Psoas muscle (tissue), 8 donors: ENCODE measurements at regions of chr12 and their contacts with region 1.

Region 1: GRCh38 chr12:452667-453210 is 7.0 kb upstream of the B4GALNT3 start:
- DNase-seq: peak; percentile 22 to 69
- ATAC-seq: peak in 3 of 4 donors; percentile 33 to 65 (median 53)
- H3K4me3 ChIP-seq: no peak overlapping the region
- H3K27ac ChIP-seq: no peak overlapping the region
- H3K4me1 ChIP-seq: no peaks in the 10 kb centered on the region
- H3K27me3 ChIP-seq: no peaks in the 10 kb centered on the region
- CTCF ChIP-seq: no peak

Region 2: DNA sequence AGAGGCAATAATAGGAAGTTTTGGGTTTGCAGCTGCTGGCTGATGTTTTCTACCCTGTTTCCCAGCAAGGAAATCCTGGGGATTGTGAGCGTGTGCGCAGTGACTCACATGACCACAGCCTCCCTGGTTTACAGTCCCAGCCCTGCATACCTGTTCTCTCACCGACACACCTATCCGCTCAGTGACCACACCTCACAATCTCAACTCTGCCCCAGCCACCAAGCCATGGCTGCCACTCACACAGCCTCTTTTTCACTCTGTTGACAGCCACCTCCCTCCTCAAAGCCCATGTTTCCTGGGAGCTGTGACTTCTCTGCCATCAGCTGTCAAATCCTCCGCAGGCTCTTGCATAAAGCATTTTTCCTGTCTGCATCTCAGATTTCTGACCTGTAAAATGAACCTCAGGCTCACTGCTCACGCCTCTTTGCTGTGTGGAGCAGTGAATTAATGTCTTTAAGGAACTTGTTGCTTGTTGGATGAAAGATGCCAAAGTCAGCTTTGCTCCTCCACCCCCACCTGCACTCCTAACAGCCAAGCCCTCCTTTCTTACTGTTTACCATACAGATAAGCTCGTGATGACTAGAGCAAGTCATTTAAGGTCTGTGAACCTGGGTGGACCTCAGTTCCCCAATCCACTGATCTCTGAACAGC is 50.5 kb after region 1 on chr12:
- intact Hi-C with region 1: loop called in 1 of 2 experiments (anchors 5 kb)
- DNase-seq: no peak
- ATAC-seq: peak; percentile 61 to 78 (median 72)
- H3K4me3 ChIP-seq: no peak overlapping the region
- H3K27ac ChIP-seq: peak overlapping the region; percentile 81
- H3K4me1 ChIP-seq: peaks cover 20% of the 10 kb centered on the region
- H3K27me3 ChIP-seq: no peaks in the 10 kb centered on the region
- CTCF ChIP-seq: no peak

Region 3: DNA sequence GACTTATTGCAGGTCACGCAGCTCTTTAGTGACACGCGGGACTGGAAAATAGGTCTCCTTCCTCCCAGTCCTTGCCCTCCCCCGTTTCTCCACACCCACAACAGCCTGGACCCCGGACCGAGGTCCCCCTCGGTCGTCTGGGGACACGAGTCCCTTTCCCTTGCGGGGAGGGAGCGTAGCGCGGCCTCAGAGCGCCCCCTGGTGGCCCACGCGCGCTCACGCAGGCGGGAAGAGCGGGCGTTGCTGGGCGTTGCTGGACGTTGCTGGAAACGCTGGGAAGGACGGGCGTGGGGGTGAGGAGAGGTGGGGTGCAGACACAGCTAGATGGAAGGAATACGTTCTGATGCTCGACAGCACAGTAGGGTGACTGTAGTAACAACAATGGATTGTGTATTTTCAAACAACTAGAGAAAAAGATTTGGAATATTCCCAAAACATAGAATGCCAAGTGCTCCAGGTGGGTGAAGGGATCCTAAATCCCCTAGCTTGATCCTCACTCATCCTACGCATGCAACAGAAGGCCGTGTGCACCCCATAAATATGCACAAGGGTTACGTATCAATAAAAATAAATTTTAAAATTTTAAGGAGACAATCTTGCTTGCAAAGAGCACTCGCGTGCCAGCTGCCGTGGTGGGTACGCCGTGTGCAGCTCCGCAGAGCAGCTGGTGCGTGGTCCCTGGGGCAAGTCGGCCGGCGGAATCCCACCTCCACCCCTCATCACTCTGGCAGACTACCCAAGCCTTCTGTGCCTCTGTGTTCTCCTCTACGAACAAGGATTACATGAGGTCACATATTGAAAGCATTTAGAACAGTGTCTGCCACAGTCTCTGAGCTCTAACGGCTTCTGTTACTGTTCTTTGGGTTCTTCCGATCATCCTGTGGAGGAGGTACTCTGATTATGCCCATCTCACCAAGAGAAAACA is 94.4 kb after region 1 on chr12:
- intact Hi-C with region 1: loop called in 1 of 2 experiments (anchors 2 kb)
- DNase-seq: peak; percentile 67 to 83
- ATAC-seq: peak; percentile 82 to 91 (median 85)
- H3K4me3 ChIP-seq: peak overlapping the region; percentile 25
- H3K27ac ChIP-seq: no peak overlapping the region
- H3K4me1 ChIP-seq: peaks cover 3% of the 10 kb centered on the region
- H3K27me3 ChIP-seq: peaks cover 0 to 4% (median 0%) of the 10 kb centered on the region in 3 donors
- CTCF ChIP-seq: peak; percentile 98

Region 4: GRCh38 chr12:1021886-1022619 is 569.3 kb after region 1 on chr12:
- intact Hi-C with region 1: loop called in 1 of 2 experiments (anchors 5 kb)
- DNase-seq: no peak
- ATAC-seq: peak in 1 of 4 donors; percentile 24
- H3K4me3 ChIP-seq: no peak overlapping the region
- H3K27ac ChIP-seq: no peak overlapping the region
- H3K4me1 ChIP-seq: peaks cover 16% of the 10 kb centered on the region
- H3K27me3 ChIP-seq: no peaks in the 10 kb centered on the region
- CTCF ChIP-seq: no peak